ENCODE measurements at regions of chr1 and their contacts with region 1.

Region 1: DNA sequence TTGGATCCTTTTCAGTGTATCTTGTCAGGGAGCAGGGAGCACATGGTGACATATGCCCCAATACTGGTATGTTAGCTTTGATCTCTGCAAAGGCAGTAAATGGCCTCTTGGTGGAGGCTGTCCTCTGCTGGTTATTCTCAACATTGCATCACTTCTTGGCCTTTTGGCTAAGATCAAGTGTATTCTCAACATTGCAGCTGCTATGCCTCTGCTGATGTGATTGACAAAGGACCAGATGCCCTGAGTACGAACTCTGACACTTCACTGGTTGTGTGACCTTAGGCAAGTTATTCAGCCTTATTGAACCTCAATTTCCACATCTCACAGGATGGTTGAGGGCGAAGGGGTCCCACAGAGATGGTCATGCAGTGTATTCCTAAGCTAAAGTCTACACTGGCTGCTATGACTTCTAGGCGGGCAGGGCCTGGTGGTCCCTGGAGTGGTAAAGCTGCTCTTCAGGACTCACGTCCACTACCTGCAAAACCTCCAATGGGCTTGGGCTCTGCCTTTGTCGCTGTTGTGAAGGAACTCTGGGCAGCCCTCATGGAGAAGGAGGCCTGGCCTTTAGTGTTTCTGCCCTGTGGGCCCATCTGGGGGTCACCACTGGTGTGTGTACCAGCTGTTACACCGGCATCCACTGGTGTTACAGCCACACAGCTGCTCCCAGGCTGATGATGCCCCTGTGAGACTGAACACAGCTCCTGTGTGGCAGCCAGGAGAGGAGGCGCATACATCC is 64.8 kb downstream of the DNTTIP2 start:
- H3K4me3 ChIP-seq: no peak overlapping the region
- H3K27ac ChIP-seq: no peak overlapping the region
- H3K4me1 ChIP-seq: no peaks in the 10 kb centered on the region
- CTCF ChIP-seq: peak; percentile 95

Region 2: GRCh38 chr1:93519196-93519827 is 294.9 kb before region 1 on chr1:
- CTCF ChIA-PET with region 1: no interaction called
- POLR2A ChIA-PET with region 1: no interaction called
- H3K4me3 ChIP-seq: no peak overlapping the region
- H3K27ac ChIP-seq: no peak overlapping the region
- H3K4me1 ChIP-seq: no peaks in the 10 kb centered on the region
- CTCF ChIP-seq: no peak

Region 3: DNA sequence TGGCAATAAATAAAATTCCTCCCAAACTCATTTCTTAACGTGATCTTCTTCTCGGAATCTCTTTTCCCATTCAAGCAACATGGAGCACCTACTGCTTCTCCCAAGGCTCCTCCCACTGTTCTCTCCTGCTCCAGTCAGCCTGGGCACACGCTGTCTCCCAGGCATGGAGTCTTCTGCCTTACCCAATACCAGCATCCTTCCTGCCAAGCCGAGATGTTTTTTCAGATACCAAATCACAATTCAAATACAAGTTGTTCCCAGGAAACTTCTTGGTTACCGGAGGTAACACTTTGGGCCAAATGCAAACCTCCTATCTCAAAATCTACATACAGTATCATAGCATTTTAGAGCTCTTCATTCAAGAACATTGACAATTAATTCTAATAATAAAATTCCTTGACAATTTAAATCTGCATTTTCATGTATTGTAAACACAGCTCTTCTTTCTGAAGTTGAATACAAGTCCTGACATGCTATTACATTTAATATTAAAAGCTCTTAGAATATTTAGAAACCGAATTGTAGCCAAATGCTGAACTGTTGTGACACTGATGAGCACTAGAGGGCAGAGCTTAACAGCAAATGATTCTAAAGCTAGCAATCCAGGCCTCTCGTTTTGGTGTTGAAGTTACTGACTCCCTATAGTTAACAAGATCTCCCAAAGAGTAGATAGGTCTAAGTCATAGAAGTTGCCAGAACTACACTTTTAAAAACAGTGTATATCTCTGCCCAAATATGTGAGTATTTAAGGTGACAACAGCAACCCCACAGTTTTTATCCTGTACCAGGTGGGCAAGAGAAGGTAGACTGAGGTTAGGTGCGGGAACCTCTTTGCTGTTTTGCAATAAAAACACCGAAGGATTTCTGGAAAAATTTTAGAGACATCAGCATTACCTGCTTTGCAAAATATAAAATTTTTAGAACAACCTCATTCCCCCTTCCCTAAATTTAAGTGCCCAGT is 184.8 kb before region 1 on chr1:
- CTCF ChIA-PET with region 1: interaction called, 309 read pairs
- POLR2A ChIA-PET with region 1: interaction called, 12 read pairs
- H3K4me3 ChIP-seq: no peak overlapping the region
- H3K27ac ChIP-seq: no peak overlapping the region
- H3K4me1 ChIP-seq: 0 out of 2 replicates have a peak, but pooled peaks cover 2% of the 10 kb centered on the region
- CTCF ChIP-seq: 0 out of 2 replicates have a peak, but pooled peaks have one; percentile 17

Region 4: DNA sequence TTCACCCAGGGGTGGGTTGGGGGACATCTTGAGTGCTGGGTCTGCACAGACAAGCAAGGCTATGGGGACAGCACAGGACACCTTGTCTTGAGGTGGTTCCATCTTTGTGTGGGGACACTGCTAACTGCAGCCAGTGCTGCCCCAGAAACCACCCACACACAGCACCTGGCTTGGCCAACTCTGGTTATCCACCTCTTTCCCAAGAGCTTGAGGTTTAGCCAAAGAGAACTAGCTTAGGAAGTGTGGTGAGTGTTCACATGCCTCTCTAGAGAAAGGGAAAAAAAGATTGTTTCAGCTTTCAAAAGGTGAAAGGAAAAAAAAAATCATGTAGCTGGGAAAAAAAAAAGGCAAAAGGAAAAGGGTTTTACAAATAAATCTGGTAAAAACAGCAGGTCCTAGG is 165.0 kb before region 1 on chr1:
- CTCF ChIA-PET with region 1: interaction called, 10 read pairs
- POLR2A ChIA-PET with region 1: no interaction called
- H3K4me3 ChIP-seq: no peak overlapping the region
- H3K27ac ChIP-seq: no peak overlapping the region
- H3K4me1 ChIP-seq: no peaks in the 10 kb centered on the region
- CTCF ChIP-seq: no peak

Region 5: DNA sequence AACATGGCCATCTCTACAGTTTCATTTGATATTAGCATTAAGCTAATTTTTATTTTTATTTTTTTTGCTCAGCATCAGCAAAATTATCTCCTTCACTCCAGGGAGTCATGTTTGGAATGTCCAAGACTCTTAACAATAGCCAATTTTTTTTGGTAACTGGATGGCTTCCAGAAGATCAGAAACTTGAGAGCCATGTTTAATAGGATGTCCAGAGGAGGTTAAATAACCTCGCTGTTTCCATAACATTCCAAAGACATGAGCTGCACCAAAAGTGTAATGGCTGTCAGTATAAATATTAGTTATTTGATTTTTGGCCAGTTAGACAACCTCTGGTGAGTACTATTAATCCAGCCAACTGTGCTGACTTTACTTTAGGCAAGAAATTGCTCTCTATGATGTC is 15.9 kb before region 1 on chr1:
- CTCF ChIA-PET with region 1: interaction called, 23 read pairs
- POLR2A ChIA-PET with region 1: no interaction called
- H3K4me3 ChIP-seq: no peak overlapping the region
- H3K27ac ChIP-seq: no peak overlapping the region
- H3K4me1 ChIP-seq: no peaks in the 10 kb centered on the region
- CTCF ChIP-seq: no peak

Region 6: GRCh38 chr1:93846211-93846991 is 32.2 kb after region 1 on chr1:
- CTCF ChIA-PET with region 1: interaction called, 120 read pairs
- POLR2A ChIA-PET with region 1: interaction called, 5 read pairs
- H3K4me3 ChIP-seq: peak overlapping the region; percentile 88
- H3K27ac ChIP-seq: peak overlapping the region; percentile 91
- H3K4me1 ChIP-seq: peaks cover 3% of the 10 kb centered on the region; the same call in 1 of the 2 replicates
- CTCF ChIP-seq: peak; percentile 67